AG04450 (cell line): ENCODE measurements at regions of chr1 and their contacts with region 1.

Region 1: GRCh38 chr1:229479660-229480399 is 28.3 kb downstream of the NUP133 start:
- DNase-seq: no peak
- H3K4me3 ChIP-seq: no peak overlapping the region
- H3K27ac ChIP-seq: no peak overlapping the region
- H3K27me3 ChIP-seq: no peaks in the 10 kb centered on the region
- CTCF ChIP-seq: no peak

Region 2: GRCh38 chr1:228664399-228664914 is 815.4 kb before region 1 on chr1:
- CTCF ChIA-PET with region 1: interaction called, 29 read pairs
- POLR2A ChIA-PET with region 1: no interaction called
- DNase-seq: peak; percentile 13
- H3K4me3 ChIP-seq: no peak overlapping the region
- H3K27ac ChIP-seq: no peak overlapping the region
- H3K27me3 ChIP-seq: peaks cover 5% of the 10 kb centered on the region
- CTCF ChIP-seq: peak; percentile 79

Region 3: GRCh38 chr1:229227298-229227919 is 252.4 kb before region 1 on chr1:
- CTCF ChIA-PET with region 1: interaction called, 11 read pairs
- POLR2A ChIA-PET with region 1: no interaction called
- DNase-seq: no peak
- H3K4me3 ChIP-seq: no peak overlapping the region
- H3K27ac ChIP-seq: no peak overlapping the region
- H3K27me3 ChIP-seq: peaks cover 14% of the 10 kb centered on the region
- CTCF ChIP-seq: peak; percentile 83

Region 4: GRCh38 chr1:229268505-229268904 is 211.3 kb before region 1 on chr1:
- CTCF ChIA-PET with region 1: interaction called, 12 read pairs
- POLR2A ChIA-PET with region 1: no interaction called
- DNase-seq: no peak
- H3K4me3 ChIP-seq: no peak overlapping the region
- H3K27ac ChIP-seq: no peak overlapping the region
- H3K27me3 ChIP-seq: no peaks in the 10 kb centered on the region
- CTCF ChIP-seq: no peak

Region 5: DNA sequence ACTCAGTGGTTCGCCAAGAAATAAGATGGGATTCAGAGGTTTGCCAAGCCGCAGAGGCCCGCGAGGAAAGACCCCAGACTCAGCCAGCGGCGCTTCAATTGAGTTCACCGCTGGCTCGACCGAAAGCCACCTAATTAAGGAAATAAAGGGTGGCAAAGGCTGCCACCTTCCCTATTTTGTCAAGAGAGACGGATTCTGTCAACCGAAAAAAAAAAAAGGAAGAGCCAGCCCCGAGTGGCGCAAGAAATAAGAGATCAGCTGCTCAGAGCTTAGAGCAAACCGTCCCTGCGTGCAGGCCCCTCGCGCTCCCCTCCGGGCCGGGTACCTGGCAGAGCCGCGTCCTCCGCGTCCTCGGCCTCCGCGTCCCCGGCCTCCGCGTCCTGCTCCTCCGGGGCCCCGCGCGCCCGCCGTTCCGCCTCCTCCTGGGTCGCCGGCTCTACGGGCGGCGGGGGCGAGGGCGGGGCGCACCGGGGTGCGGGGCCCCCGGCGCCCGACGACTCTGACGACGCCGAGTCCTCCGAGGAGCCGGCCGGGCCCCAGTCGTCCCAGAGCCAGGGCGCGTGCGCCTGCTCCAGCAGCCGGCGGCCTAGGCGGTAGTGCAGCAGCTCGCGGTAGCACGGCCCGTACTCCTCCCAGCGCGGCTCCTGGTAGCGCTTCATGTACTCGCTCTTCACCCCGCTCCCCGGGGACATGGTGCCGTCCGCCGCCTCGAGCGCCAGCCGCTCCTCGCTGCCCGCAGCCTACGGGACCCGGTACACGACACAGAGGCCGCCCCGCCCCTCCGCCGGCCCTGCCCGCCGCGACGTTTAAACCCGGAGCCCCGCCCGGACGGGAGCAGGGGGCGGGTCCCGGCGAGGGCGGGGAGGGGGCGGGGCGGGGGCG is 137.8 kb before region 1 on chr1:
- CTCF ChIA-PET with region 1: interaction called, 11 read pairs
- POLR2A ChIA-PET with region 1: no interaction called
- DNase-seq: no peak
- H3K4me3 ChIP-seq: peak overlapping the region; percentile 81
- H3K27ac ChIP-seq: no peak overlapping the region
- H3K27me3 ChIP-seq: no peaks in the 10 kb centered on the region
- CTCF ChIP-seq: no peak

Region 6: DNA sequence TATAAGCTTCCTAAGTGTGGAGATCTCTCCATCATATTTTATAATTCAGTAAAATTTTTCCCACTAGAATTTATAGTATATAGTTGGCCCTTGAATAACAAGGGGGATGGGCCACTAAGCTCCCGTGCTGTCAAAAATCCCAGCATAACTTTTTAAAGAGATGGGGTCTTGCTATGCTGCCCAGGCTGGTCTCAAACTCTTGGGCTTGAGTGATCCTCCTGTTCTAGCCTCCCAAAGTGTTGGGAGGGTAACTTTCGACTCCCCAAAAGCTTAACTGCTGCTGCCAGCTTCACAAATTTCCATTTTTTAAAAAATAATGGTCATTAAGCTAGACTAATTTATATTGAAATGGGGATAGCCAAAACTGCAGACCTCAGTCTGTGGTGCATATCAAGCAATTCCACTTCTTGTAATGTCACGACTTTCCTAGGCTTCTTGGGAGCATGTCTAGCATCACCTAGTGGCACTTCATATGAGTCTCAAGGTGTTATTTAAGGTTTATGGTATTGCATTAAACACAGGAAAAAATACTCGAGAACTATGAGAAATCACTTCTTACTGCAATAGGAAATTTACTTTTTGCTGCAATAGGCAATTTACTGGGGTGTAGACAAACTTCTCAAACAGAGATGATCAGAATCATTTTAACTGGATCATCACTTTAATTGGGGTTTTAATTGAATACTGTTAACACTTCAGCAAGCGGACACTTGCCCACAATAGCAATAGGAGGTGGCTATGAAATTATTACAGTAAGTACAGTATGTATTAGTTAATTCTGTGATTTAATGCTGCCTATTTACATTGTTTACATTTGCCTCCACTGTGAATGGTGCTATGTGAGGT is 26.7 kb before region 1 on chr1:
- CTCF ChIA-PET with region 1: interaction called, 11 read pairs
- POLR2A ChIA-PET with region 1: no interaction called
- DNase-seq: no peak
- H3K4me3 ChIP-seq: no peak overlapping the region
- H3K27ac ChIP-seq: no peak overlapping the region
- H3K27me3 ChIP-seq: no peaks in the 10 kb centered on the region
- CTCF ChIP-seq: peak; percentile 69

Region 7: DNA sequence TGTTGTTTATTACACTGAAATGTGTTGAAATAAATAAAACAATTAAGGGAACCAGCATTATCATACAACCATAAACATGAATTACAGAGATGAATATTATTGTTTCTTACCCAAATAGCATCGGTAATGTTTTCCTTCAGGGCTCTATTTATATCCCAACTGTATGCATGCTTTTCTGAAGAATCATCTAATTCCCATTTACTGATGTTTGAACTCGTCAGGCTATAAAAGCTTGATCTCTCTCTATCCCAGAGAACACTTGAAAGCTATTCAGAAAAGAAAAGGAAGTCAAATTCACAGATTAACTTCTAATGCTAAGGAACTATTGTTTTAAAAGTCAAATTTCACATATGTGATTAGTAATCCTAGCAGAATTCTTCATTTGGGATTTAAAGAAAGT is 16.0 kb after region 1 on chr1:
- CTCF ChIA-PET with region 1: interaction called, 27 read pairs
- POLR2A ChIA-PET with region 1: no interaction called
- DNase-seq: no peak
- H3K4me3 ChIP-seq: no peak overlapping the region
- H3K27ac ChIP-seq: no peak overlapping the region
- H3K27me3 ChIP-seq: no peaks in the 10 kb centered on the region
- CTCF ChIP-seq: no peak